Heart left ventricle (tissue), 16 donors: ENCODE measurements at regions of chr10 and their contacts with region 1.

Region 1: DNA sequence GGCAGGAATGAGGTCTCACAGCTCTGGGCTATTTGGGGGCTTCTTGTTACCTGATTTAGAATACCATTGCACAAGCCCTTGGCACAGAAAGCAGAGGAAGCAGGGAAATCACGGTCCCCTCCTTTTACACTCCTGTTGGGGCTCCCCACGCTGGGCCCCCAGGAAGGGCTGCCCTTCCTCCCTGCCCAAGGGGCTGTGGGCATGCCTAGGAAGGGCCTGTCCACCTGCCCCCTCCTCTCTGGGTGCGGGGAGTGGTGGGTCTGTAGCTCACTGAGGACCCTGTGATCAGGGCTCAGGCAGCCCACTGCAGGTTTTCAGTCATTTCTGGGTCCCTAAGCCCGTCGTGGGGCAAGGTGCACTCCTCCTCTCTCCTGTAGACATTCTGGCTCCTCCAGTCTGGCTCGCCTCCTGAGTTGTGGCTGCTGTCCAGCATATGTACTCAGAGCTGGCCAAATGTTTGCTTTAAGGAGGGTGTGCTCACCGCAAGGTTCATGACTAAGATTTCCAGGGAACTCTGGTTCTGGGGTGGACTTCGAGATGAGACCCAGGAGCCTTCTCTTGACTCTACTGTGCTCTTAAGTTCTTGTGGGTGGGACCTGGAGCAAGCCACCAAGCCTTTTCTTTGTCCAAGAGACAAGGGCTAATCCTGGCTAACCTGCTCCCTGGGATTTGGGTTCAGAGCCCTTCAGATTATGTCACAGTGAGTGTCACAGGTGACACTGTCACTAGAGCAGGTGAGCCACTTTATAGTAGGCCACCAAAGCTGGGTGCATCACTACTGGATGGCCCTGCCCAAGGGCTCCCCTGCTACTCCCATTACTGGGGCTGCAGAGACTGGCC is 56.0 kb downstream of the TACR2 start:
- DNase-seq: peak; percentile 61 to 84 (median 71)
- ATAC-seq: peak; percentile 63 to 79 (median 71)
- H3K4me3 ChIP-seq: no peak overlapping the region
- H3K27ac ChIP-seq: peak overlapping the region; percentile 45 to 78 (median 67)
- H3K4me1 ChIP-seq: peaks cover 17 to 68% (median 56%) of the 10 kb centered on the region in 12 donors
- H3K27me3 ChIP-seq: no peaks in the 10 kb centered on the region
- CTCF ChIP-seq: no peak
- POLR2A ChIP-seq: no peak

Region 2: GRCh38 chr10:69119896-69120295 is 240.8 kb before region 1 on chr10:
- intact Hi-C with region 1: no loop called
- DNase-seq: no peak
- ATAC-seq: no peak
- H3K4me3 ChIP-seq: no peak overlapping the region
- H3K27ac ChIP-seq: no peak overlapping the region
- H3K4me1 ChIP-seq: peaks cover 0 to 11% (median 6%) of the 10 kb centered on the region in 12 donors
- H3K27me3 ChIP-seq: no peaks in the 10 kb centered on the region
- CTCF ChIP-seq: no peak
- POLR2A ChIP-seq: no peak

Region 3: DNA sequence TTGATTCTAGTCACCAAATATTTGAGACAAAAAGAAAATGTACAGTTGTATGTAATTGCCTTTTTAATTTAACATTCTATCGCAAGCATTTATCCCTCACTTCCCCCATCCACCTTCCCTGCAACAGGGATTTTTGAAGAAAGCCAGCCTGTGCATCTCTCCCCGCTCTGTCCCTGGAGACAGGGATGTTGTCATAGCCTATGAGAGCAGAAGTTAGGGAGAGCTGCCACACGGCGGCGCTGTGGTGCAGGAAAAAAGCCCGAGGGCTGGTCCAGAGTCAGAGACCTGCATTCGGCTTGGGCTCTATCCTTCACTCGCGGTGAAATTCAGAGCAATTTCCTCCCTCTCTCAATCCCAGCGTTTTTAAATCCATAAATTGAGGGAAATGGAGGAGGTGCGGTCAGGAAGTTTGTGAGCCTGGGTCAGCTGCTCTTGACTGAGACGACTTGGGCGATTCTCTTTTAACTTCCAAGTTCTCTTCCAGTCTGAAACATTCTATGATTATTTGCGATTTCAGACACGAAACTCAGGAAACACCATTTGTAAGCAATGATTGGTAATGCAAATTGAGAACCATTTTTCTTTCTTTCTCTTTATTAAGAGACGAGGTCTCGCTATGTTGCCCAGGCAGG is 123.1 kb before region 1 on chr10:
- intact Hi-C with region 1: no loop called
- DNase-seq: peak; percentile 82 to 92 (median 86)
- ATAC-seq: peak; percentile 92 to 99 (median 98)
- H3K4me3 ChIP-seq: peak overlapping the region in 1 of 12 donors; percentile 16
- H3K27ac ChIP-seq: no peak overlapping the region
- H3K4me1 ChIP-seq: peaks cover 0 to 10% (median 3%) of the 10 kb centered on the region in 12 donors
- H3K27me3 ChIP-seq: no peaks in the 10 kb centered on the region
- CTCF ChIP-seq: peak; percentile 80 to 96 (median 92)
- POLR2A ChIP-seq: no peak

Region 4: GRCh38 chr10:69318106-69318866 is 42.4 kb before region 1 on chr10:
- intact Hi-C with region 1: loop called in 6 of 10 experiments (anchors 2 to 5 kb)
- DNase-seq: peak; percentile 94 to 96 (median 95)
- ATAC-seq: peak; percentile 93 to 97 (median 96)
- H3K4me3 ChIP-seq: peak overlapping the region; percentile 74 to 100 (median 94)
- H3K27ac ChIP-seq: peak overlapping the region; percentile 90 to 98 (median 95)
- H3K4me1 ChIP-seq: peaks cover 8 to 51% (median 33%) of the 10 kb centered on the region in 12 donors
- H3K27me3 ChIP-seq: no peaks in the 10 kb centered on the region
- CTCF ChIP-seq: peak in 2 of 12 donors; percentile 11 to 21
- POLR2A ChIP-seq: peak in 1 of 2 donors; percentile 90

Region 5: GRCh38 chr10:69327463-69328379 is 33.0 kb before region 1 on chr10:
- intact Hi-C with region 1: loop called in 6 of 10 experiments (anchors 5 kb)
- DNase-seq: peak; percentile 75 to 87 (median 81)
- ATAC-seq: peak; percentile 88 to 95 (median 90)
- H3K4me3 ChIP-seq: peak overlapping the region in 10 of 12 donors; percentile 15 to 51 (median 32)
- H3K27ac ChIP-seq: peak overlapping the region; percentile 77 to 95 (median 88)
- H3K4me1 ChIP-seq: peaks cover 13 to 99% (median 80%) of the 10 kb centered on the region in 12 donors
- H3K27me3 ChIP-seq: no peaks in the 10 kb centered on the region
- CTCF ChIP-seq: no peak
- POLR2A ChIP-seq: peak in 1 of 2 donors; percentile 57